ENCODE measurements at regions of chr1 and their contacts with region 1.

Region 1: DNA sequence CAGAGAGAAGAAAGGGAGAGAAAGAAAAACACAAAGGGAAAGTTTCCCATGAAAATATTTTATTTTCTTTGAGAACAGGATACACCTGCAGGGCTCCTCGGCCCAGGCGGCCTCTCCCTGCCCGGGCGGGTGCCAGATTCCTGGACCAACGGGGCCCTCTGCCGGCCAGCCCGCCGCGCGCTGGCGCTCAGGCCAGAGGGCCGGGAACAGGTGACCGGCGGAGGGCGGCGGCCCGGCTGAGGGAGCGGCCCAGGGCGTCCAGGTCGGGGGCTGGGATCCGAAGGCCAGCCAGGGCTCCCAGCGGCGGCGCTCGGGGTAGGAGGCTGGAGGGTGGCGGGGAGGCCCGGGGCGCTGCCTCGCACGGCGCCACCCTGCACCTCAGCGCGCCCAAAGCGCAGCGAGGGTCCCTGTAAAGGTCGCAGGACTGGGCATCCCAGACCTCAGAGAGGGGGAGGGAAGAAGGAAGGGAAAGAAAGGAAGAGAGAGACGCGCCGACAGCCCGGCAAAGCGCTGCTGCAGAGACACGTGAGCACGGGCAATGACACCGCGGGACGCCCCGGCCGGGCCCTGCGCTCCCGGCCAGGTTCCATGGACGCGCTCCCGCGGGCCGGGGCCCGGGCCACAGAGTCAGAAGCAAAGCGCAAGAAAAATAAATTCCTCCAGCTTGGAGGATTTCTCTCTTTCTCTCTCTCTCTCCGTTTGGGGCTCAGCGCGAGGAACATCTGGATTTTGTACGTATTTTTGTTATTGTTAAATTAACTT is 927 bp downstream of the WNT9A start:
- DNase-seq: peak; percentile 78
- ATAC-seq: peak; percentile 82
- H3K4me3 Mint-ChIP-seq: peak overlapping the region; percentile 57
- H3K27ac Mint-ChIP-seq: no peak overlapping the region
- H3K4me1 Mint-ChIP-seq: peaks cover 12% of the 10 kb centered on the region
- H3K27me3 Mint-ChIP-seq: peaks cover 17% of the 10 kb centered on the region

Region 2: GRCh38 chr1:227542143-227543120 is 404.4 kb before region 1 on chr1:
- CTCF ChIA-PET with region 1: no interaction called
- POLR2A ChIA-PET with region 1: no interaction called
- intact Hi-C with region 1: loop called in 1 of 2 experiments (anchors 2 kb)
- DNase-seq: peak; percentile 95
- ATAC-seq: peak; percentile 97
- H3K4me3 Mint-ChIP-seq: peak overlapping the region; percentile 47
- H3K27ac Mint-ChIP-seq: peak overlapping the region; percentile 72
- H3K4me1 Mint-ChIP-seq: peaks cover 4% of the 10 kb centered on the region
- H3K27me3 Mint-ChIP-seq: no peaks in the 10 kb centered on the region

Region 3: GRCh38 chr1:227762233-227762911 is 184.4 kb before region 1 on chr1:
- CTCF ChIA-PET with region 1: interaction called, 6 read pairs
- POLR2A ChIA-PET with region 1: no interaction called
- intact Hi-C with region 1: loop called (anchors 1 kb)
- DNase-seq: peak; percentile 93
- ATAC-seq: peak; percentile 72
- H3K4me3 Mint-ChIP-seq: no peak overlapping the region
- H3K27ac Mint-ChIP-seq: peak overlapping the region; percentile 8
- H3K4me1 Mint-ChIP-seq: peaks cover 90% of the 10 kb centered on the region
- H3K27me3 Mint-ChIP-seq: no peaks in the 10 kb centered on the region

Region 4: DNA sequence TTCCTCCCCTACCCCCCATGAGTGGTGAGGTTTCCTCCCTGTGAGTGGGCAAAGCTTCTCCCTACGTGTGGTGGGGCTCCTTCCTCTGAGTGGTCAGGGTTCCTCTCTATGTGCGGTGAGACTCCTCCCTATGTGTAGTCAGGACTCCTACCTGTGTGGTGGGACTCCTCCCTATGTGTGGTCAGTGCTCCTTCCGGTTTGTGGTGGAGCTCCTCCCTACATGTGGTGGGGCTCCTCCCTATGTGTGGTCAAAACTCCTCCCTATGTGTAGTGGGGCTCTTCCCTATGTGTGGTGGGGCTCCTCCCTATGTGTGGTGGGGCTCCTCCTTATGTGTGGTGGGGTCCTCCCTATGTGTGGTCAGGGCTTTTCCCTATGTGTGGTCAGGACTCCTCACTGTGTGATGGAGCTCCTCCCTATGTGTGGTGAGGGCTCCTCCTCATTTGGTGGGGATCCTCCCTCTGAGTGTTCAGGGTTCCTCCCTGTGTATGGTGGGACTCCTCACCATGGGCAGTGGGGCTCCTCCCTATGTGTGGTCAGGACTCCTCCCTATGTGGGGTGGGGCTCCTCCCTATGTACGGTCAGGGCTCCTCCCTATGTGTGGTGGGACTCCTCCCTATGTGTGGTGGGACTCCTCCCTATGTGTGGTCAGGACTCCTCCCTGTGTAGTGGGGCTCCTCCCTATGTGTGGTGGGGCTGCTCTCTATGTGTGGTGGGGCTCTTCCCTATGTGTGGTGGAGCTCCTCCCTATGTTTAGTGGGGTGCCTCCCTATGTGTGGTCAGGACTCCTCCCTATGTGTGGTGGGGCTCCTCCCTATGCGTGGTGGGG is 102.3 kb before region 1 on chr1:
- CTCF ChIA-PET with region 1: no interaction called
- POLR2A ChIA-PET with region 1: no interaction called
- intact Hi-C with region 1: no loop called
- DNase-seq: no peak
- ATAC-seq: no peak
- H3K4me3 Mint-ChIP-seq: no peak overlapping the region
- H3K27ac Mint-ChIP-seq: no peak overlapping the region
- H3K4me1 Mint-ChIP-seq: no peaks in the 10 kb centered on the region
- H3K27me3 Mint-ChIP-seq: no peaks in the 10 kb centered on the region

Region 5: GRCh38 chr1:228058172-228058948 is 111.6 kb after region 1 on chr1:
- CTCF ChIA-PET with region 1: no interaction called
- POLR2A ChIA-PET with region 1: no interaction called
- intact Hi-C with region 1: no loop called
- DNase-seq: no peak
- ATAC-seq: no peak
- H3K4me3 Mint-ChIP-seq: no peak overlapping the region
- H3K27ac Mint-ChIP-seq: no peak overlapping the region
- H3K4me1 Mint-ChIP-seq: peaks cover 9% of the 10 kb centered on the region
- H3K27me3 Mint-ChIP-seq: peaks cover 34% of the 10 kb centered on the region

Measured in activated CD4-positive, alpha-beta T cell treated with anti-CD3 and anti-CD28 coated beads for 36 hours (primary cell).